Activated naive CD4-positive, alpha-beta T cell treated with anti-CD3 and anti-CD28 coated beads for 36 hours (primary cell): ENCODE measurements at regions of chr1 and their contacts with region 1.

Region 1: GRCh38 chr1:119140177-119141019 is at the start of gene WARS2:
- DNase-seq: peak; percentile 95
- H3K4me3 Mint-ChIP-seq: no peak within 1 kb of the TSS
- H3K27ac Mint-ChIP-seq: no peak within 1 kb of the TSS
- H3K4me1 Mint-ChIP-seq: peaks cover 27% of the 10 kb centered on the region
- H3K27me3 Mint-ChIP-seq: no peaks in the 10 kb centered on the region
- total RNA-seq, gene WARS2: 28.3 to 30.0 TPM

Region 2: DNA sequence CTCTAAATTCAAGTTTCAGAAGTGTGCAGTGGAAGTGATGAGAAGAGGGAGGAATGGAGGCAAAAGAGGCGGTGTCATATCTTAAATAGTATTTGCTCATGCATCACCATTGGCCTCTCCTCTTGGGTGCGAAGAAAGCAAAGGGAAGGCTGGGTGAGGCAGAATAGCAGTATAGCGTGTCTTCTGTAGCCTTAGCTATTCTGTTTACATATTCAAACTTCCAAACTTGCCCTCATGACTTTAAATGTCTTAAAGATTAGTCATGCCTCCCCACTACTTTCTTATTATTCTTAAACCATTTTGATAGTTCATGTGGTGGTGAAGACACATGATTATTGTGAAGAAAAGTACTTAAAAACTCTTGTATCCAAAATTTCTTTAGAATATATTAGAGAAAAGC is 1639.1 kb before region 1 on chr1:
- CTCF ChIA-PET with region 1: no interaction called
- intact Hi-C with region 1: no loop called
- DNase-seq: no peak
- H3K4me3 Mint-ChIP-seq: no peak overlapping the region
- H3K27ac Mint-ChIP-seq: no peak overlapping the region
- H3K4me1 Mint-ChIP-seq: no peaks in the 10 kb centered on the region
- H3K27me3 Mint-ChIP-seq: no peaks in the 10 kb centered on the region

Region 3: DNA sequence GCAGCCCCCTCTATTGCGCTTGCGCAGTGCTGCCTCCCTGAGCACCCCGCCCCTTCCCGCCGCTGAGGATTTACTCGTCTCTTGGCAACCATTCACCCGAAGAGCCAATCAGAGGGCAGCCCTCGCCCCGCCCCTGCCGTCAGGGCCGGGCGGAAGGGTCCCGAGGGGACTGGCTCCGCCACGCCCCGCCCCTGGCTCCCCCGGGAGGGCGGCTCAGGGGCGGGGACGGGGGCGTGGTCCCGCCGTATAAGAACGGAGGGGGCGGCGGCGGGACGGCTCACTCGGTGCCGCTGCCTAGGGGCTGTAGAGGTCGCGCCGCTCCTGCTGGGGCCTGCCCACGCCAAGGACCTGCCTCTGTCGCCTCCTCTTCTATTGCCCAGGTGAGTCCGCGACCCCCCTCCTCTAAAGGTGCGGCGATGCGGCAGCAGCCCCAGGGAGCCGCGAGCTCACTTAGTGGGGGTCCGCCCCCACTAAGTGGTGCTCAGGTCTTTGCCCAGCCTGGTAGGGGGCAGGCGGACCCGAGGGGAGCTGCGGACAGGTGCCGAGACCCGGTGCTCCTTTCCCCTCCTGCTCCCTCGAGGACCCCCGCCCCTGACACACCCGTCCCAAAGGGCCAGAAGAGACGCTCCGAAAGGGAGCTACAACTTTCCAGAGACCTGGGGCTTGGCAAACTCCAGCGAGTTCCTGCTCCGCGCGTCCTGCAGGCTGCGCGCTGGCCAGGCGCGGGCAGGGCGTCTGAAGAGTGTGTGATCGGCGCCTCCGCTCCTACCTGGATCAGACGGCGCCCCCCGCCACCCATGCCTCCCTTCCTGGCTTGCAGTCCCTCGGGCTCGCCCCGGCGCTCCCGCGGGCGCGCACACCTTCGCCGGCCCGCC is 1534.4 kb before region 1 on chr1 and contains the start of gene TENT5C:
- CTCF ChIA-PET with region 1: no interaction called
- intact Hi-C with region 1: loop called (anchors 2 kb)
- DNase-seq: peak; percentile 98
- H3K4me3 Mint-ChIP-seq: peak within 1 kb of the TSS; percentile 86
- H3K27ac Mint-ChIP-seq: peak within 1 kb of the TSS; percentile 78
- H3K4me1 Mint-ChIP-seq: peaks cover 22% of the 10 kb centered on the region
- H3K27me3 Mint-ChIP-seq: peaks cover 2% of the 10 kb centered on the region
- total RNA-seq, gene TENT5C: 10.7 to 11.2 TPM

Region 4: GRCh38 chr1:119209596-119210295 is 69.3 kb after region 1 on chr1:
- CTCF ChIA-PET with region 1: no interaction called
- intact Hi-C with region 1: no loop called
- DNase-seq: no peak
- H3K4me3 Mint-ChIP-seq: no peak overlapping the region
- H3K27ac Mint-ChIP-seq: no peak overlapping the region
- H3K4me1 Mint-ChIP-seq: no peaks in the 10 kb centered on the region
- H3K27me3 Mint-ChIP-seq: no peaks in the 10 kb centered on the region

Region 5: GRCh38 chr1:119275145-119276134 is 135.0 kb after region 1 on chr1:
- CTCF ChIA-PET with region 1: interaction called, 3 read pairs
- intact Hi-C with region 1: loop called (anchors 5 kb)
- DNase-seq: peak; percentile 70
- H3K4me3 Mint-ChIP-seq: no peak overlapping the region
- H3K27ac Mint-ChIP-seq: no peak overlapping the region
- H3K4me1 Mint-ChIP-seq: no peaks in the 10 kb centered on the region
- H3K27me3 Mint-ChIP-seq: no peaks in the 10 kb centered on the region

Region 6: GRCh38 chr1:119347858-119348257 is 207.5 kb after region 1 on chr1:
- CTCF ChIA-PET with region 1: no interaction called
- intact Hi-C with region 1: loop called (anchors 1 kb)
- DNase-seq: peak; percentile 51
- H3K4me3 Mint-ChIP-seq: no peak overlapping the region
- H3K27ac Mint-ChIP-seq: no peak overlapping the region
- H3K4me1 Mint-ChIP-seq: peaks cover 3% of the 10 kb centered on the region
- H3K27me3 Mint-ChIP-seq: peaks cover 10% of the 10 kb centered on the region

Region 7: GRCh38 chr1:119711804-119712341 is 571.5 kb after region 1 on chr1 and contains the start of gene PHGDH:
- CTCF ChIA-PET with region 1: no interaction called
- intact Hi-C with region 1: loop called (anchors 2 kb)
- DNase-seq: peak; percentile 85
- H3K4me3 Mint-ChIP-seq: peak within 1 kb of the TSS; percentile 88
- H3K27ac Mint-ChIP-seq: peak within 1 kb of the TSS; percentile 84
- H3K4me1 Mint-ChIP-seq: peaks cover 31% of the 10 kb centered on the region
- H3K27me3 Mint-ChIP-seq: no peaks in the 10 kb centered on the region
- total RNA-seq, gene PHGDH: 422 to 439 TPM